ENCODE measurements at regions of chr20 and their contacts with region 1.

Region 1: DNA sequence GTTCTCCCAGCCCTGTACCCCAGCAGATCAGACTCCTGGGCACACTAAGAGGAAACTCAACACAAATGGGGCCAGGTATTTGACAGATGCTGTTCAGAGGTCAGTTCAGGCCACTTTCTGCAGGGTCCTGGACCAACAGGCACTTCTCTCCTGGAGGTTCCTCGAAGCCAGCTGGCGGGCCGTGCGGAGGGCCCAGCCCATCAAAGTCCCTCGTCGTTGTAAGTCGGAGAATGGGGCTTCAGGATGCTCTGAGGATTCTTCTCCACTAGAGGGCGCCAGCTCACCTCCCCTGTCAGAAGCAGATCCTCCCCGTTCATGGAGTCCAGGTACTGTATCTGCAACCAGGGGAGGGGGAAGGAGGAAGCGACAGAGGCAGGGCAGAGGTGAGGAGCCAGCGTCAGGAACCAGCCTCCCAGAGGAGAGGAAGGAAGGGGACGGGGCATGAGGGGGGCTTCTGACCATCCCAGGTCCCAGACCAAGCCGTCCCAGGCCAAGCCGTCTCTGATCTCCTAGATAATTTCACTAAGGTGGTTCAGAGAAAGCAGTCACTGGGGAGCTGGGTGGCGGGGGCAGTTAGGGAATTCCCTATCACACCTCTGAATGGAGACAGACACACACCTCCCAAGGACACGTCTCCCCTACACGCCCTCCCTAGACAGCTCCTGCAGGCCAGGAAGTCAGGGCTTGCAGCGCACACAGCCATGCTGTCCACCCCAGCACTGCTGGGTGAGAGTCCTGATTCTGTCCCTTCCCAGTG is 11.7 kb upstream of the FAM83C start:
- DNase-seq: peak; percentile 70 to 83 (median 70)
- ATAC-seq: peak; percentile 66 to 78 (median 77)
- H3K4me3 ChIP-seq: no peak overlapping the region
- H3K27ac ChIP-seq: no peak overlapping the region
- H3K4me1 ChIP-seq: peaks cover 0 to 26% (median 10%) of the 10 kb centered on the region in 4 donors
- H3K27me3 ChIP-seq: no peaks in the 10 kb centered on the region
- CTCF ChIP-seq: peak; percentile 90 to 93 (median 92)
- POLR2A ChIP-seq: no peak

Region 2: DNA sequence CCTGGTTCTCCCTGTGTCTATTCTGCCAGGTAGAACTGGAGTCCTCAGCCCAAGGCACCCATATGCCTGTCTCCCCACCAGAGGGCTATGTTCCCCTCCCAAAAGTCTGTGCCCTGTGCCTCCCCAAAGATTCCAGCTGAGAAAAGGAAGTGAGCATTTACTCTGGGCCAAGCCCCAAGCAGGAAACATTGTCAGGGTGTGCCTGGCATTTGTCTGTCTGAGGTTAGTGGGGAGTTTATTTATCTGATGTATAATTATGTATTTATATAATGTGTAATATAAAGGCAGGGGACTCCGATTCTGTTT is 128.5 kb after region 1 on chr20:
- intact Hi-C with region 1: loop called in 1 of 2 experiments (anchors 5 kb)
- DNase-seq: no peak
- ATAC-seq: no peak
- H3K4me3 ChIP-seq: no peak overlapping the region
- H3K27ac ChIP-seq: no peak overlapping the region
- H3K4me1 ChIP-seq: no peaks in the 10 kb centered on the region
- H3K27me3 ChIP-seq: no peaks in the 10 kb centered on the region
- CTCF ChIP-seq: no peak
- POLR2A ChIP-seq: no peak

Region 3: GRCh38 chr20:35447082-35447789 is 143.3 kb after region 1 on chr20:
- intact Hi-C with region 1: loop called (anchors 5 kb)
- DNase-seq: peak; percentile 81 to 85 (median 85)
- ATAC-seq: peak; percentile 95 to 99 (median 98)
- H3K4me3 ChIP-seq: peak overlapping the region; percentile 27 to 38 (median 36)
- H3K27ac ChIP-seq: no peak overlapping the region
- H3K4me1 ChIP-seq: no peaks in the 10 kb centered on the region
- H3K27me3 ChIP-seq: no peaks in the 10 kb centered on the region
- CTCF ChIP-seq: peak; percentile 87 to 97 (median 94)
- POLR2A ChIP-seq: no peak

Region 4: DNA sequence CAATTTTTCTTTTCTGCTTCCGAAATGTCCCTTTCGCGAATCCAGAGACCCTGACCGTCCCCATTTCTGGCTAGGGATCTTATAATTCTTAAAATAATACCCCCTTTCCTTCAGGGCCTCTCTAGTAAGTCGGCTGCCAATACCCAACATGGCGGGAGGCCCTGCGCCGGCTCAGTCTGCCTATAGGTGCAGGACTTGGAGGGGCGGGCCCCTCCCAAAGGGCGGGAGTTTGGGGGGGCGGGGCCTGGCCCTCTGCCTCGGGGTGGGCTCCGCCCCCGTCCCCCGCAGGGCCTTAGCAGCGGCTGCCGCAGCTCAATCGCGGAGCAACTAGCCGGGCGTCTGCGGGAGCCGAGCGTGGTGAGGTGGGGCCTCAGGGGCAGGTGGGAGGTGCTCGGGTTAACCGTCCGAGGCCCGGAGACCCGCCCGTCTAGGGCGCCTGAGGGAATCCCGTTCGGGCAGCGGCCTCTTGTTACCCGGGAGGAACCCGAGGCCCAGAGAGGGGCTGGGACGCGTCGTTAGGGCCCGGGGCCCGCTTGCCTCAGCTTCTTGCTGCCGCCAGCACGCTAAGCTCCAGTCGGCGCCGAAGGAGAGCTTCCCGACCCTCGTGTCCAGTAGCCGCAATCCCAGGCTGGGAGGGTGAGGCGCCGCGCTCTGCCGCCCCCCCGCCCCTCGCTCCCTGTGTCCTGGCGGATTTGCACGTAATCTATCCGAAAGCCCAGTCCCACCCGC is 151.1 kb after region 1 on chr20 and contains the start of gene CEP250:
- intact Hi-C with region 1: loop called in 1 of 2 experiments (anchors 5 kb)
- DNase-seq: peak; percentile 96
- ATAC-seq: peak; percentile 96 to 99 (median 98)
- H3K4me3 ChIP-seq: peak within 1 kb of the TSS; percentile 75 to 96 (median 88)
- H3K27ac ChIP-seq: peak within 1 kb of the TSS; percentile 95 to 97 (median 96)
- H3K4me1 ChIP-seq: no peaks in the 10 kb centered on the region
- H3K27me3 ChIP-seq: no peaks in the 10 kb centered on the region
- CTCF ChIP-seq: no peak
- POLR2A ChIP-seq: no peak
- total RNA-seq, gene CEP250: 5.9 to 11.2 (median 9.0) TPM

Region 5: GRCh38 chr20:35741892-35742740 is 438.2 kb after region 1 on chr20 and contains the start of gene RBM39:
- intact Hi-C with region 1: no loop called
- DNase-seq: peak; percentile 99 to 100 (median 100)
- ATAC-seq: peak; percentile 89 to 95 (median 93)
- H3K4me3 ChIP-seq: peak within 1 kb of the TSS; percentile 79 to 85 (median 83)
- H3K27ac ChIP-seq: peak within 1 kb of the TSS; percentile 99 to 100 (median 100)
- H3K4me1 ChIP-seq: peaks cover 0 to 37% (median 13%) of the 10 kb centered on the region in 4 donors
- H3K27me3 ChIP-seq: no peaks in the 10 kb centered on the region
- CTCF ChIP-seq: peak; percentile 30 to 58 (median 46)
- POLR2A ChIP-seq: peak; percentile 96
- total RNA-seq, gene RBM39: 86.4 to 166 (median 120) TPM